ENCODE measurements at regions of chr7 and their contacts with region 1.

Region 1: DNA sequence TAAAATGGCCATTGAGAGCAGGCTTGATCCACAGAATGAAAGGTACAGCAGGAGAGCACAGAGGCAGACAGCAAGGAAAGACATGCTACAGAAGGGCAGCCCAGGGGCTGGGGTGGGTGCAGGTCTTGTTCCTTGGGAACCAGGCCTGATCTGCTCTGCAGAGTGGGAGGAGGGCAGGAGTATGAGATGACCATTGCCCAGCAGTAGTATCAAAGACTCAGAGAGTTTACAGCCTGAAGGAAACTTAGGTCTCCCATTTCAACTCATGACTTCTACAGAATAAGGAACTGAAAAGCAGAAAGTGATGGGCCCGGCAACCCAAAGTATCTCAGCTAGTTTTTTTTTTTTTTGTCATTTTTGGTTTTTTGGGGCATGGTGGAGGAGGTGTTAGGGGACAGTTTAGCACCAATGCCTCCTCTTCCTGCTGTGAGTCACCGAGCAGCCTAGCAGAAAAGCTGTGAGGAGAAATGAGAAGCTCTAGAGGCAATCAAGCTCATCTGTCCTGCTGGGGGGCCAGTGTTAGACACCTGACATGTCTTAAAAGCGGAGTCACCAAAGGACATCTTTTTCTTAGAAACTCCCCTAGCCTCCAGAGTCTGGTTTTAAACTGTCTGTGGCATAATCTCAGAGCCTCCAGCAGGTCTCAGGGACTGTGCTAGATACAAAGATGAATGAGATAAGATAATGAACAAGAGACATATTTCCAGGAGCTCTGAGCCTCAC is 34.3 kb upstream of the HERPUD2 start:
- DNase-seq: peak; percentile 61
- H3K4me3 Mint-ChIP-seq: peak overlapping the region; percentile 1
- H3K27ac Mint-ChIP-seq: peak overlapping the region; percentile 69
- H3K4me1 Mint-ChIP-seq: peaks cover 61% of the 10 kb centered on the region
- H3K27me3 Mint-ChIP-seq: peaks cover 4% of the 10 kb centered on the region

Region 2: DNA sequence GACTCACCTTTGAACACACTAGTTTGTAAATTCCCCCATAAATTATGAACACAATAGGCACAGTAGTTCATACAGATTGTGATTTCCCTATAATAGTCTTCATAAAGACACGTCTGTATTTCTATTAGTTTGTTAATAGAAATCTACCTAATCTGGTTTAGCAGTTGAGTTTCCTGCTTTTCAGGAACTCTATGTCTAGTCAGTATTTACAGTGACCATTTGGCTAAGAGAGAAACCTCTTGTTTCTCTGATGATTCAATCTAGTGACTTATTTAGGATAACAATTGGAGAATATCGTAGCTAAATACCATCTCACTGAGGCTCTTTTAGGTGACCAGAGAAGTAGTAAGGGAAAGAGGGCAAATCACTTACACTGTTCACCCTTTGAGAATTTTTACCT is 28.4 kb before region 1 on chr7:
- CTCF ChIA-PET with region 1: interaction called, 86 read pairs
- POLR2A ChIA-PET with region 1: interaction called, 81 read pairs
- DNase-seq: no peak
- H3K4me3 Mint-ChIP-seq: no peak overlapping the region
- H3K27ac Mint-ChIP-seq: no peak overlapping the region
- H3K4me1 Mint-ChIP-seq: peaks cover 48% of the 10 kb centered on the region
- H3K27me3 Mint-ChIP-seq: peaks cover 2% of the 10 kb centered on the region

Region 3: DNA sequence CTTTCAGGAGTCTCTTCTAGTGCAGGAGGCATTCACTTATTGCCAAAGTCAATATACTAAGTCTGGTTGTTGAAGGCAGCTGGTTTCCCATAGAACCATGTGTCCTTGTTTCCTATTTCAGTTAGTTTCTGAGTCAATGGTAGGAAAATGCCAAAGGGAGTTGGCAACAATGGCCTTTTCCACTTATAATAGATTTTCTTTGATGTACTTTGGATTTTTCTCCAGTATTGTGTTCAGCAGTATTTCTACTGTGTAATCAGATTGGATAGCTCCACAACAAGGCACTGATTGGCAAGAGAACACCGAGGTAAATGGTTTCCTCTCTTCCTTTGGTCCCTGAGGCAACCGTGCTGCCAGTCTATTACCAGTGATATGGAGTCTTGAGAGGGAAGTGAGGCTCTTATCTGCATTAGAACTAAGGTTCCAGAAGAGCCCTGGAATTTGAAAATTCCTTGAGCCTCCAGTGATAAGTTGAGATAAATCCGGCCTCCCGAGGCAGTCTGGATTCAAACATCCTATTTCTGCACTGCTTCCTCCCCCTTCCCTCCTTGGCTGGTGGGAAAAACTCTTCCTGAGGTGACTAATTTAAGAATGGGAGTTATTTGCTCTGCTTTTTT is 63.8 kb after region 1 on chr7:
- CTCF ChIA-PET with region 1: no interaction called
- POLR2A ChIA-PET with region 1: no interaction called
- DNase-seq: no peak
- H3K4me3 Mint-ChIP-seq: no peak overlapping the region
- H3K27ac Mint-ChIP-seq: no peak overlapping the region
- H3K4me1 Mint-ChIP-seq: no peaks in the 10 kb centered on the region
- H3K27me3 Mint-ChIP-seq: peaks cover 12% of the 10 kb centered on the region